Cardiac septum (tissue), 1 donor: ENCODE measurements at regions of chr6 and their contacts with region 1.

Region 1: DNA sequence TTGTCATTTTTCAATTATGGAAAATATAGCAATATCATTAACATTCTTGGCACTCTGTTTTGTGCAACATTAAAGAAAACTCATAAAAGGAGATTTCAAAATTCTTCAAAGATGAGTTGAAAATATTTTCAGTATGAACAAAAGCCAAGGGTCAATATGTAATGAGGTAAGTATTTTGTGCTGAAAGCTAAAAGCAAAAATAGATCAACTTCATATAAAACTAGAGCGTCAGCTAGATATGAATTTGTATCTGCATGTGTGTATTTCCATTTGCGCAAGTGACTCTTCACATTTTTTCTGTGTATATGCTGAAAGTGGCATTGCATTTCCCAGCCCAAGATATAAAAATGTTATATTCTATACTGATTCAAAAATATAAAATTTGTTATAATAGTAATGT is 492.1 kb upstream of the EYS start:
- DNase-seq: no peak

Region 2: DNA sequence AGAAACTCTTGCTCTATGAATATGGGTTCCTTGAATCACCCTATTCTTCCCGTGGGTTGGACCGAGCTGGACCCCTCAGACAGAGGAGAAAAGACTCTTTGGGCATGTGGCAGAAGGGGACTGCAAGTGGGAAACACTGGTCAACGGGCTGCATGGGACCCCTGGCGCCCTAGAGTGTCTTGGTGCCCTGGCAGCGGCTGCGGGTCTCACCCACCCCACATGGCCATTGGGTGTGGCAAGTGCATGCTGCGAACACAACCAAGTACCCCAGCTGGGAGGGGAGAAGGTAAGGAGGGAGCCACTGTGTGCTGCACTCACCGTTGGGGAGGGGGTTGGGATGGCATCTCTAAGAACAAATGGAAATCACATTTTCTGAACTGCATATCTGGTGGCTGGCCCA is 53.3 kb before region 1 on chr6:
- intact Hi-C with region 1: no loop called
- DNase-seq: no peak

Region 3: GRCh38 chr6:66226109-66226508 is 26.9 kb after region 1 on chr6:
- intact Hi-C with region 1: loop called (anchors 2 kb)
- DNase-seq: no peak